Activated B cell treated with CpG ODN at 0.5 μM for 24 hours (primary cell): ENCODE measurements at regions of chr1 and their contacts with region 1.

Region 1: DNA sequence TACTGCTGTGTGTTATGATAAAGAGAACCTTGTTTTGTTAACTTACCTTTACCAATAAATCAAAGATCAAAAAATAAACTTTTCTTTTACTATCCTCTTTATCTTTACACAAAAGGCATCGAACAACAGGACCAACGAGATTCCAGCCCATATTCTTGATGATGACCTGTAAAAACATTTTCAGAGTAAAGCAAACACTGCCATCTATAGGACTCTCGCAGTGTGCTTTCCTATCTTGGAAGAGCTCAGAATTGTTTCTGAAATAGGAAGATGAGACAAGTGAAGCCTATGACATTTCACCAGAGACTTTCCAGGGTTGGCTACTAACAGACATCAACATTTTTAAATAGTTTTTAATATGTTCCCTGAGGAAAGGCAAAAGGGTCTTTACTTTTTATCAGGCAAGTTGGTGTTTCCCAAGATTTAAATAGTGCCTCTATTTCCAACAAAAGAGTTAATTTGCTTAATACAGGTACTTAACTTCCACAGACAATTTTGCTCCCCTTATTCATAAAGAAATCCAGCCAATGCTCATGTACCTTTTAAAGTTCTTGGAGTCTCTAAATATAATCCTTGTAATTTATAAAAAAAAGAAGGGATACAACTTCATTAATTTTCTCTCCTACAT is 7.3 kb downstream of the GLMN start:
- DNase-seq: no peak
- ATAC-seq: no peak
- H3K4me3 Mint-ChIP-seq: no peak overlapping the region
- H3K27ac Mint-ChIP-seq: no peak overlapping the region
- H3K4me1 Mint-ChIP-seq: peaks cover 5% of the 10 kb centered on the region
- H3K27me3 Mint-ChIP-seq: no peaks in the 10 kb centered on the region
- CTCF ChIP-seq: no peak

Region 2: DNA sequence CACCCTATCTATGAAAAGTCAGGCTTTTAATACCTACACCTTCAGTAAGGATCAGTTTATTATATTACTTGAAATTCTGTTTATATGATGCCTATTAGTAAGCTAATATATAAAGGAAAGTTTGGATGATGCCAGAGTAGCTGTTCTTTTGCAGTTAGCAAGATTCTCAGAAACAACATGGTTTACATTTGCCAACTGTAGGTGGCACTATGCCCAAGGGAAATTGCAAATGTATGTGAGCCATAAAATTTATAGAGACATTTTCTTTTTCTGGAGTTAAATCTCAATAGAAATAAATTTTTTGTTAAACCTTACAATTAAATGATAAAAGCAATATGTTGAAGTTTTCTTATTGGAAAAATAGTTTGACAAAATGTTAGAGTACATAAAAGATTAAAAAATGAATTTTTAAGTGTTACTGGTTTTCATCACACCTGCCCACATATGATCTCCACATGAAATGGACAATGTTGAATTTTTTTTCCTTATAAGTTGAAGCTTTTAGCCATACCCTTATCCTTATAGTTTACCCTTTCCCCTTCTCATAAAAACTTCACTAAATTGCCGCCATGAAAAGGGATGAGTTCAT is 293.8 kb before region 1 on chr1:
- CTCF ChIA-PET with region 1: interaction called, 6 read pairs
- POLR2A ChIA-PET with region 1: no interaction called
- intact Hi-C with region 1: loop called (anchors 1 kb)
- DNase-seq: no peak
- ATAC-seq: no peak
- H3K4me3 Mint-ChIP-seq: no peak overlapping the region
- H3K27ac Mint-ChIP-seq: no peak overlapping the region
- H3K4me1 Mint-ChIP-seq: no peaks in the 10 kb centered on the region
- H3K27me3 Mint-ChIP-seq: no peaks in the 10 kb centered on the region
- CTCF ChIP-seq: no peak